Activated naive CD4-positive, alpha-beta T cell treated with anti-CD3 and anti-CD28 coated beads for 36 hours (primary cell): ENCODE measurements at regions of chr3 and their contacts with region 1.

Region 1: GRCh38 chr3:120742198-120742849 is at the starts of genes GTF2E1 and RABL3:
- DNase-seq: peak; percentile 98
- H3K4me3 Mint-ChIP-seq: peak within 1 kb of the TSS; percentile 90
- H3K27ac Mint-ChIP-seq: peak within 1 kb of the TSS; percentile 96
- H3K4me1 Mint-ChIP-seq: peaks cover 33% of the 10 kb centered on the region
- H3K27me3 Mint-ChIP-seq: no peaks in the 10 kb centered on the region
- total RNA-seq, gene GTF2E1: 13.2 TPM
- total RNA-seq, gene RABL3: 34.7 to 36.8 TPM

Region 2: DNA sequence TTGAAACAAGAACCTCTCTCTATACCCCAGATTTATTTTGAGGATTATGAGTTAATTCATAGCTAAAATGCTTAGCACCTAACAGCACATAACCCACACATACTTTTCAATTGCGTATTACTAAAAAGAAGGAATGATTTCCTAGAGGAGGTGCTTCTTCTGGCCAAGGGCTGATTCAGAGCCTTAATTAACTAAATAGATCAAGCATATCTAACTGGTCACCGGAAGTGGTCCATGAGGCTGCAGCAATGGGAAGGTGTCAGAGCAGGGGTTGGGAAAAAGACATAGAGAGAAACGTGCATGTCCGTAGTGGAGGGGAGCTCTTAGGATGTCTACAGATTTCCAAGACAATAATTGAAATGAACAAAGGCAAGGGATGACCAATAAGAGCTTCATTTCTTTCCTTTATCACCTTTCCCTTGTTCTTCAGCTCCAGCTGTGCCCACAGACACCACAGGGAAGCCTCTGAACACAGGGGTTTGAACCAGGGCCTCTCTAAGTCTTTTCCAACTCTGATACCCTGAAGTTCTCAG is 60.8 kb before region 1 on chr3:
- CTCF ChIA-PET with region 1: no interaction called
- intact Hi-C with region 1: loop called (anchors 2 kb)
- DNase-seq: no peak
- H3K4me3 Mint-ChIP-seq: no peak overlapping the region
- H3K27ac Mint-ChIP-seq: no peak overlapping the region
- H3K4me1 Mint-ChIP-seq: peaks cover 6% of the 10 kb centered on the region
- H3K27me3 Mint-ChIP-seq: no peaks in the 10 kb centered on the region

Region 3: DNA sequence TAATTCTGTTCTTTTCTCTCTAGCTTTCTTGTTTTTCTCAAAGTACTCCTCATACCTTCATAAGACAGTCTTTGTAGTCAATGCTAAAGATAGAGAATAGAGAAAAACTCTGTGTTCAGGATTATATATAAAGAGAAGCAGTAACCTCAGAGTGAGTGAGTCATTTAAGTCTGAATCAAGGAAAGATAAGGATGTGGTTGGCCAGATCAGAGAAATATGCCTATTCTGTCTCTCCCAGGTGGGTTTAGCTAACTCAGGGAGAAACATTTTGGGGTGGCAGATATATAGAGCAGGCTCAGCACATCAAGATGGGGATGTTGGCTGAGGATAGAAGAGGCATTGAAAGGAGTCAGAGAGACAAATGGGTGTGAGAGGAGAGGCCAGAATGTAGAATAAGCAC is 31.6 kb after region 1 on chr3:
- CTCF ChIA-PET with region 1: no interaction called
- intact Hi-C with region 1: loop called (anchors 1 kb)
- DNase-seq: no peak
- H3K4me3 Mint-ChIP-seq: no peak overlapping the region
- H3K27ac Mint-ChIP-seq: no peak overlapping the region
- H3K4me1 Mint-ChIP-seq: peaks cover 9% of the 10 kb centered on the region
- H3K27me3 Mint-ChIP-seq: no peaks in the 10 kb centered on the region